Heart right ventricle (tissue), 16 donors: ENCODE measurements at regions of chr5 and their contacts with region 1.

Region 1: DNA sequence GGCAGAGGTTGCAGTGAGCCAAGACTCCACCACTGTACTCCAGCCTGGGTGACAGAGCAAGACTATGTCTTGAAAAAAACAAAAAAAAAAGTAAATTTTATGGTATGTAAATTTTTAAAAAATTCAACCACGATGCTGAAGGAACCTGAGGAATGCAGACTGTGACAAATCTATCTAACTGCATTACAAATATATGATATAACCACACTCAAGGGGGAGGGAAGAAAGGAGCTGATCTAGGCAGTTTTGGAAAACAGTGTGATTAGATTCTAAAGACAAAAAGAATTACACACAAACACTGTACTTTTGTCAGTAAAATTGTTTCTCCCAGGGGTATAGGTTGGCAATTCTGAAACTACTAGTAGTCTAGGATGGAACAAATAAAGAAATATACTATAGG is 17.0 kb downstream of the LARS1 start:
- DNase-seq: no peak
- ATAC-seq: no peak
- H3K4me3 ChIP-seq: no peak overlapping the region
- H3K27ac ChIP-seq: no peak overlapping the region
- H3K4me1 ChIP-seq: no peaks in the 10 kb centered on the region
- H3K27me3 ChIP-seq: no peaks in the 10 kb centered on the region
- CTCF ChIP-seq: no peak

Region 2: GRCh38 chr5:146111409-146111808 is 54.1 kb before region 1 on chr5:
- intact Hi-C with region 1: loop called in 1 of 10 experiments (anchors 10 kb)
- DNase-seq: no peak
- ATAC-seq: no peak
- H3K4me3 ChIP-seq: no peak overlapping the region
- H3K27ac ChIP-seq: no peak overlapping the region
- H3K4me1 ChIP-seq: peaks cover 0 to 5% (median 0%) of the 10 kb centered on the region in 9 donors
- H3K27me3 ChIP-seq: no peaks in the 10 kb centered on the region
- CTCF ChIP-seq: no peak

Region 3: DNA sequence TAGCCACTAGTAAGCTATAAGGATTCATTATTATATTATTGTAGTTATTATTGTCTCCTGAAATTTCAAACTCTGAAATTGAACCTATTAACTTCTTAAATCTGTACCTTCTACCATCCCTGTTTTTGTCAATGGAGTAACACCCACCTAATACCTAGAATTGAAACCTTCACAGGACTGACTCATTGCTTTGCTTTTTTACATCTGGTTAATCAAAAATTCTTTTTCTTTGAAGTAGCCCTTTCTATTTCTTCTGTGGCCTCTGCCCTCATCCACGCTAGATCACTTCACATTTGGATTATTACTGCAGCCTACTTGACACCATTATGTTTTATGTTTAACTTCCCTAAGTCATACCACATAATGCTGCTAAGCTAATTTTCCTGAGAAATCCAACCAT is 73.5 kb after region 1 on chr5:
- intact Hi-C with region 1: loop called in 1 of 10 experiments (anchors 10 kb)
- DNase-seq: no peak
- ATAC-seq: no peak
- H3K4me3 ChIP-seq: no peak overlapping the region
- H3K27ac ChIP-seq: no peak overlapping the region
- H3K4me1 ChIP-seq: peaks cover 0 to 20% (median 6%) of the 10 kb centered on the region in 9 donors
- H3K27me3 ChIP-seq: no peaks in the 10 kb centered on the region
- CTCF ChIP-seq: no peak

Region 4: DNA sequence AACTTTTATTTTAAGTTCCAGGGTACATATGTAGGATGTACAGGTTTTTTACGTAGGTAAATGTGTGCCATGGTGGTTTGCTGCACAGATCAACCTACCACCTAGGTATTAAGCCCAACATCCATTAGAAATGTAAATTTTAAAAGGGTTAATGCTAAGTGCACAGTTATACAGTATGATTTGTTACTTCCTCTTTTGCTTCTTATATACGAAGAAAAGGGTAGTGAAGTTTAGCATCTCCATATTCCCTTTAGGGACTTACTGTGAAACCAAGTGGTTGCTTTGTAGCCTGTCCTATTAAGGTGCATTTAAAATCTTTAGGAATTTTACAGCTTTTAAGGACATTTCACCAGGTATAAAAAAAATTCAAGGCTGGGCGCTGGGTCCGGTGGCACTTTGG is 84.3 kb after region 1 on chr5:
- intact Hi-C with region 1: loop called in 1 of 10 experiments (anchors 5 kb)
- DNase-seq: no peak
- ATAC-seq: no peak
- H3K4me3 ChIP-seq: no peak overlapping the region
- H3K27ac ChIP-seq: no peak overlapping the region
- H3K4me1 ChIP-seq: no peaks in the 10 kb centered on the region
- H3K27me3 ChIP-seq: no peaks in the 10 kb centered on the region
- CTCF ChIP-seq: no peak

Region 5: GRCh38 chr5:146273109-146273508 is 107.6 kb after region 1 on chr5:
- intact Hi-C with region 1: loop called in 1 of 10 experiments (anchors 5 kb)
- DNase-seq: no peak
- ATAC-seq: no peak
- H3K4me3 ChIP-seq: no peak overlapping the region
- H3K27ac ChIP-seq: no peak overlapping the region
- H3K4me1 ChIP-seq: no peaks in the 10 kb centered on the region
- H3K27me3 ChIP-seq: no peaks in the 10 kb centered on the region
- CTCF ChIP-seq: no peak